ENCODE measurements at regions of chr6 and their contacts with region 1.

Region 1: GRCh38 chr6:1802491-1803395 is 193.0 kb downstream of the FOXC1 start:
- DNase-seq: no peak
- ATAC-seq: no peak
- H3K4me3 ChIP-seq: no peak overlapping the region
- H3K27ac ChIP-seq: no peak overlapping the region
- H3K4me1 ChIP-seq: peaks cover 3% of the 10 kb centered on the region; the same call in 1 of the 2 replicates
- H3K27me3 ChIP-seq: no peaks in the 10 kb centered on the region
- CTCF ChIP-seq: no peak

Region 2: GRCh38 chr6:1348675-1349074 is 454.1 kb before region 1 on chr6:
- CTCF ChIA-PET with region 1: no interaction called
- POLR2A ChIA-PET with region 1: no interaction called
- intact Hi-C with region 1: no loop called
- DNase-seq: no peak
- ATAC-seq: no peak
- H3K4me3 ChIP-seq: no peak overlapping the region
- H3K27ac ChIP-seq: no peak overlapping the region
- H3K4me1 ChIP-seq: no peaks in the 10 kb centered on the region
- H3K27me3 ChIP-seq: peaks cover 38% of the 10 kb centered on the region
- CTCF ChIP-seq: no peak

Region 3: DNA sequence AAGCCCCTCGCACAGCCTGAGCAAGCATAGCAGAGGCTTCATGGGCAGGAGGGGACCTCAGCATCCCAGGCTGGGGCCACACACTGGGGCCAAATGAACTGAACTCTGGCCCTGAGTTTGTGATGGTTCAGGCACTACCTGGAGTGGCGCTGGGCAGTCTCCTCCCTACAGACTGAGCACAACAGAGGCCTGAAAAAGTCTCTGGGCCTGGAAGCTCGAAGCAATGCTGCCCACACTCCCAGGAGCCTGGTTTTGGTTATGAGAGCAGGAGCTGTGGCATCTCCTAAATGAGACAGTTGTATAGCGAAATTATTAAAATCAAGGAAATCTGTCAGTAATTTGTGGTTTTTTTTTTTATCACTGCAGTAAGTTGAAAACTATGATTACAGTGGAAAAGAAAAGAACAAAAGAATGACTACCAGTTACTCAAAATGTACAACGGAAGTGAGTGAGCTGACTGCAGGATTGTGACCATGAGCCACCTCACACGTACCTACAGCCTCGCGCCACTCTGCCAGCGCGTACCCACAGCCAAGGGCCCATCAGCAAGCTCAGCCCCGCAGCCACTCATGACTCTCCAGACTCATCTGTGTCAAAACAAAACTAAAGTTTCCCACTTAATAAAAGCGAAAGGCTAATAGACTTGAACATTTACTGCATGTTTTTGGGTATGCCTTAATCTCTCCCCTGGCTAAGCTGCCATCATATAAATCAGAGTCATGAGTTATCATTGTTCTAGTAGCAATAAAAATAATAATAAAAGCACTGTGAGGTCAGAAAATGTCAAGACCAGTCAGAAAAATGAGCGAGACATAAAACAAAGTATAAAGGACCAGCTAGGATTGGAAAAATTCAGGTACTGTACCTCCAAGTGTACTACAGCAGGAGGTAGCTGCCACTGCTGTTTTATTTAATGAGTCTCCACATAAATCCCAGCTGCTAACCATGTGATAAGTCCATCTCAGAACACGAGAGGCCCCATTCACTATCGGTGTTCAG is 16.0 kb before region 1 on chr6:
- CTCF ChIA-PET with region 1: no interaction called
- POLR2A ChIA-PET with region 1: no interaction called
- intact Hi-C with region 1: loop called (anchors 1 kb)
- DNase-seq: no peak
- ATAC-seq: peak; percentile 45; the same call in 1 of the 2 replicates
- H3K4me3 ChIP-seq: no peak overlapping the region
- H3K27ac ChIP-seq: no peak overlapping the region
- H3K4me1 ChIP-seq: no peaks in the 10 kb centered on the region
- H3K27me3 ChIP-seq: no peaks in the 10 kb centered on the region
- CTCF ChIP-seq: no peak